AG04449 (cell line): ENCODE measurements at regions of chr2 and their contacts with region 1.

Region 1: GRCh38 chr2:1140389-1141003 is 189.8 kb downstream of the SNTG2 start:
- DNase-seq: no peak
- H3K4me3 ChIP-seq: no peak overlapping the region
- CTCF ChIP-seq: peak; percentile 91

Region 2: GRCh38 chr2:953975-954686 is 186.4 kb before region 1 on chr2:
- CTCF ChIA-PET with region 1: interaction called, 32 read pairs
- POLR2A ChIA-PET with region 1: no interaction called
- DNase-seq: no peak
- H3K4me3 ChIP-seq: no peak overlapping the region
- CTCF ChIP-seq: peak; percentile 20

Region 3: GRCh38 chr2:1153920-1154319 is 13.4 kb after region 1 on chr2:
- CTCF ChIA-PET with region 1: interaction called, 10 read pairs
- POLR2A ChIA-PET with region 1: no interaction called
- DNase-seq: no peak
- H3K4me3 ChIP-seq: no peak overlapping the region
- CTCF ChIP-seq: no peak